Mammary epithelial cell (primary cell): ENCODE measurements at regions of chr17 and their contacts with region 1.

Region 1: GRCh38 chr17:37791447-37792399 is 46.9 kb upstream of the HNF1B start:
- DNase-seq: peak; percentile 4
- H3K4me3 ChIP-seq: no peak overlapping the region
- H3K27ac ChIP-seq: no peak overlapping the region
- H3K4me1 ChIP-seq: no peaks in the 10 kb centered on the region
- H3K27me3 ChIP-seq: peaks cover 18% of the 10 kb centered on the region
- CTCF ChIP-seq: peak; percentile 44 to 50

Region 2: DNA sequence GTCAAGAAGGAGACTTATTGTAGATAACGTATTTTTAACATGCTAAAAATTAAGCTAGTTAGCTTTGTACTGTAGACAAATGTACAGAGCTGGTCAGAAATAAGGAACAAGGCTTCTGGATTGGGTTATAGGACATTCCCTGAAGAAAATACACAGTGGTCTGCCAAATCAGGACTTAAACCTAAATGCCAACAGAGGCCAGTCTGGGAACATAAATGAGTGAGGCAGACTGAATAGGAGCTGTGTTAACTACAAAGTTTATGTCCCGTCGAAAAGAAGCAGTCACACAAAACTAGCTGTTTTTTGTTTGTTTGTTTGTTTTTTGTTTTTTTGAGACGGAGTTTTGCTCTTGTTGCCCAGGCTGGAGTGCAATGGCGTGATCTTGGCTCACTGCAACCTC is 536.3 kb before region 1 on chr17:
- CTCF ChIA-PET with region 1: no interaction called
- dilution Hi-C with region 1: no loop called
- in situ Hi-C with region 1: no loop called
- intact Hi-C with region 1: no loop called
- DNase-seq: no peak
- H3K4me3 ChIP-seq: no peak overlapping the region
- H3K27ac ChIP-seq: no peak overlapping the region
- H3K4me1 ChIP-seq: peaks cover 7% of the 10 kb centered on the region
- H3K27me3 ChIP-seq: no peaks in the 10 kb centered on the region
- CTCF ChIP-seq: no peak

Region 3: DNA sequence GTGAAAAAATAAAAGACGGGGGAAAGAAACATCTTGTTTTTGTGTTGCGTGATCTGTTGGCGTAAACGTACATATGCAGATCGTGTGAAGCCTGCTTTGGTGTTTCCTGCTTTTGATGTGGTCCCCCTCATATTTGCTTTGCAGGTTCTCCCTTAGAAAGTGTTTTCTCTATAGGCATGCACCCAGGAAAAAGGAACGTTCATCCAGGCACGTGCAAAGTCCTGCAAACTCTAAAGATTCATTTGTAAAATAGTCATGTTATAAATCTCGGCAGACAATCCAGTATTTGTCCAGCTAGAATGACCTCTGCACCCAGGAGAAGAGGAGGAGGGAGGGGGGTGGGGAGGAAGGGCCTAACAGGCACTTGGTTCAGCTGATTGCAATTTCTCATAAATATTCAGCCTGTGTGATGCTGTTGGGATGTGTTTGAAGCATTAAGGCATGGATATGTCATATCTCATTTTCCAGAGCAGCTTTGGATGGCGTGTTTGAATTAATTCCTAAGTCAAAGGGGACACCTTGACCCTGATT is 108.2 kb before region 1 on chr17:
- CTCF ChIA-PET with region 1: interaction called, 26 read pairs
- dilution Hi-C with region 1: no loop called
- in situ Hi-C with region 1: no loop called
- intact Hi-C with region 1: no loop called
- DNase-seq: no peak
- H3K4me3 ChIP-seq: no peak overlapping the region
- H3K27ac ChIP-seq: no peak overlapping the region
- H3K4me1 ChIP-seq: no peaks in the 10 kb centered on the region
- H3K27me3 ChIP-seq: peaks cover 12% of the 10 kb centered on the region
- CTCF ChIP-seq: no peak

Region 4: DNA sequence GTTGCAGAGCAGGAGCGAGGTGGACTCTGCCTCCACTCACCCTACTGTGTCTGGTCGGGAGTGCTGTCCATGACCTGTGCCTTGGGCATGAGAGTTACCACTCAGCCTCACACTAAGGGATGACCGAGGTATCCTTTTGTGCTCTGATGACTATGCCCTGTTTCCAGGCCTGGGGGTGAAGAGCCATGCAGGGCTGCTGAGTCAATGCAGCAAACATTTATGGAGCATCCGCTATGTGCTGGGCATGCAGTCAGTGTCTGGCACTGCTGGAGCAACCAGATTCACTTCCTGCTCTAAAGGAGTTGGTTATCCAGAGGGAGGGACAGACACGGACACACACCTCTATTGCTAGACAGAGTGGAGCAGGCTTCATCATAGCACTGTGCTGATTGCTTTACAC is 39.2 kb before region 1 on chr17:
- CTCF ChIA-PET with region 1: no interaction called
- dilution Hi-C with region 1: no loop called
- in situ Hi-C with region 1: no loop called
- intact Hi-C with region 1: no loop called
- DNase-seq: peak; percentile 69
- H3K4me3 ChIP-seq: no peak overlapping the region
- H3K27ac ChIP-seq: no peak overlapping the region
- H3K4me1 ChIP-seq: no peaks in the 10 kb centered on the region
- H3K27me3 ChIP-seq: peaks cover 3% of the 10 kb centered on the region
- CTCF ChIP-seq: no peak

Region 5: DNA sequence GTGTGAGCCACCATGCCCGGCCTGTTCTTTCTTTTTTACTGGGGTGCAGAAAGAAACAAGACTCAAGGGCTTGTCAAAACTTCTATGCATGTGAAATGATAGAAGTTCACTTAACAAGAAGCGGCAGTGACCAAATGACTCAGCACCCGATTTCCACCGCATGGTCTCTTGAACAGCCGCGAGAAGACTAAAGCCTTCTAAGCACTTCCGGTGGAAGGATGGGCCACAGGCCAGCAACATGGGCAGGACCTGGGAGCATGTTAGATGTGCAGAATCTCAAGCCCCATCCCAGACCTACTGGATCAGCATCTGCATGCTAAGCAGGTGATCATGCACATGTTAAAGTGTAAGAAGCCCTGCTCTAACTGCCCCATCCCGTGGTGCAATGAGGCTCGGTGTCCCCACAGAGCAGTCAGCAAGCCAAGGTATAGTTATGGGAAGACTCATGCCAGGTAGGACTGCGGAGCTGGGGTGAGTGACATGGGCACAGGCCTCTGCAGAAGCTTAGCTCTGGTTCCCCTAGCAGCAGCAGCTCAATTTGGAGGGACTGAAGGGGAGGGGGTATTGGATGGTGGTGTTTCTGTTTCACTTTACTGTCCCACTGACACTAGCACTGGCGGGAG is 41.6 kb after region 1 on chr17:
- CTCF ChIA-PET with region 1: no interaction called
- dilution Hi-C with region 1: loop called (anchors 5 kb)
- in situ Hi-C with region 1: no loop called
- intact Hi-C with region 1: no loop called
- DNase-seq: no peak
- H3K4me3 ChIP-seq: no peak overlapping the region
- H3K27ac ChIP-seq: no peak overlapping the region
- H3K4me1 ChIP-seq: peaks cover 3% of the 10 kb centered on the region
- H3K27me3 ChIP-seq: peaks cover 4% of the 10 kb centered on the region
- CTCF ChIP-seq: no peak